ENCODE measurements at regions of chr11 and their contacts with region 1.

Region 1: GRCh38 chr11:63212742-63213141 is 30.7 kb downstream of the SLC22A25 start:
- DNase-seq: peak; percentile 70
- ATAC-seq: peak; percentile 54; the same call in 1 of the 2 replicates
- H3K4me3 ChIP-seq: no peak overlapping the region
- H3K27ac ChIP-seq: no peak overlapping the region
- H3K4me1 ChIP-seq: no peaks in the 10 kb centered on the region
- H3K27me3 ChIP-seq: peaks cover 44% of the 10 kb centered on the region
- CTCF ChIP-seq: peak; percentile 75

Region 2: GRCh38 chr11:62905927-62906531 is 306.7 kb before region 1 on chr11:
- CTCF ChIA-PET with region 1: no interaction called
- POLR2A ChIA-PET with region 1: no interaction called
- intact Hi-C with region 1: loop called (anchors 2 kb)
- DNase-seq: peak; percentile 98
- ATAC-seq: peak; percentile 90
- H3K4me3 ChIP-seq: no peak overlapping the region
- H3K27ac ChIP-seq: no peak overlapping the region
- H3K4me1 ChIP-seq: peaks cover 9% of the 10 kb centered on the region
- H3K27me3 ChIP-seq: no peaks in the 10 kb centered on the region
- CTCF ChIP-seq: peak; percentile 99

Region 3: DNA sequence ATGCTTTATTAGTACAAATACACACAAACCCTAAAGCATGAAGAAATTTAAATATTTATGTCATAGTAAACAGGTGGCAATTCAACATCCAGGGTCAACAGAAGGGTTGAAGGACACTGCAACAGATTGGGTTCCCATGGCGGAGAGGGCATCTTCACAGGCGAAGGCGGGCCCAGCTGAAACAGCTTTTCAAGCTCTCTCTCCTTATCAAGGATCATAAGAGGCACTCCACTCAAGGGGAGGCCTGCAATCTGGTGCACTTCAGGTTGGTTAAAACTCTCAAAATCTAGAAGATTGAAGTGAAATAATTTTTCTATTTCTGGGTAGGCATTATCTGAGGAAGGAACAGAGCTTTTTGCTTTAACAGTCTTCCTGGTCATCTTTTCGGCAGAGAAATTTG is 180.3 kb before region 1 on chr11:
- CTCF ChIA-PET with region 1: no interaction called
- POLR2A ChIA-PET with region 1: no interaction called
- intact Hi-C with region 1: loop called (anchors 1 kb)
- DNase-seq: no peak
- ATAC-seq: no peak
- H3K4me3 ChIP-seq: no peak overlapping the region
- H3K27ac ChIP-seq: no peak overlapping the region
- H3K4me1 ChIP-seq: no peaks in the 10 kb centered on the region
- H3K27me3 ChIP-seq: peaks cover 44% of the 10 kb centered on the region
- CTCF ChIP-seq: no peak

Region 4: GRCh38 chr11:63132985-63133775 is 79.6 kb before region 1 on chr11:
- CTCF ChIA-PET with region 1: no interaction called
- POLR2A ChIA-PET with region 1: no interaction called
- intact Hi-C with region 1: loop called (anchors 1 kb)
- DNase-seq: no peak
- ATAC-seq: no peak
- H3K4me3 ChIP-seq: no peak overlapping the region
- H3K27ac ChIP-seq: no peak overlapping the region
- H3K4me1 ChIP-seq: no peaks in the 10 kb centered on the region
- H3K27me3 ChIP-seq: peaks cover 54% of the 10 kb centered on the region
- CTCF ChIP-seq: no peak

Measured in PC-3 (cell line).